Gastrocnemius medialis (tissue), 4 donors: ENCODE measurements at regions of chr11 and their contacts with region 1.

Region 1: GRCh38 chr11:65111744-65112414 is at the start of gene TM7SF2:
- DNase-seq: peak; percentile 93
- ATAC-seq: peak; percentile 81 to 89
- H3K4me3 ChIP-seq: peak within 1 kb of the TSS; percentile 63 to 72 (median 66)
- H3K27ac ChIP-seq: peak within 1 kb of the TSS; percentile 74 to 90 (median 81)
- H3K4me1 ChIP-seq: peaks cover 36 to 48% of the 10 kb centered on the region in 2 donors
- H3K27me3 ChIP-seq: no peaks in the 10 kb centered on the region
- CTCF ChIP-seq: no peak
- POLR2A ChIP-seq: peak; percentile 84 to 94
- total RNA-seq, gene TM7SF2: 7.3 to 18.4 (median 11.0) TPM

Region 2: DNA sequence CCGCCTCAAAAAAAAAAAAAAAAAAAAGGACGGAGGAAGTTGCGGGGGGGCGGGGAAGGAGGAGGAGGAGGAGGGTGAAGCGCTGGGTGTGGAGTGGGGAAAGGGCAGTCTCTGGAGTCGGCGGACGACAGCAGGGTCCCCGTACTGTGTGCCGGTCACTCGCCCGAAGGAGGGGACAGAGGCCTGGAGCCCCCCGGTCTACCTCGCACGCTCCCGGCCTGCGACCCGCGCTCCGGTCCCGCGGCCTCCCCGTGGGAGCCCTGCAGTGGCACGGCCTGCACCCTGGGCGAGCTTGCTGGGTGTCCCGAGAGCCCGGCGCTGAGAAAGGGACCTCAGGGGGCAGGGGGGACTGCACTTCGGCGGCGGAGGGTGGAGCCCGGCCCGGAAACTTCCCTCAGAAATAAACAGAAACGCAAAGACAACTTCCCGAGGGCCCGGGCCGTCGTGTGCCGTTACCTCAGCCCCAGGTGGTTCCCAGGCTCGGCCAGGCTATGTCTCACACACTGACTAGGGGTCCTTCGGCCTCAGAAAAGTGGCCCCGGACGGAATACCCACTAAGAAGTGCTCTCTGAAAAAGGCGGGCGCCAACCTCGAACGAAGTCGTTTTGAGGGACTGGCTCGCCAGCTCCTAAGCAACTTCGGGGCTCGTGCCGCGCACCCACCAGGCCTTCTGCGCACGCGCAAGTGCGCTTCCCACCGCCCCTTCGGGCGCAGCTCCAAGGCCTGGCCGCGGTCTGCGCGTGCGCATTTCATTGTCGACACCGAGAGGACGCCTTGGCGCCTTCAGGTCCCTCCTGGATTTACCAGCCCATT is 140.3 kb before region 1 on chr11 and contains the start of gene MAJIN:
- in situ Hi-C with region 1: no loop called
- intact Hi-C with region 1: no loop called
- DNase-seq: peak; percentile 58 to 76
- ATAC-seq: peak; percentile 90 to 92
- H3K4me3 ChIP-seq: peak within 1 kb of the TSS; percentile 46 to 54 (median 52)
- H3K27ac ChIP-seq: peak within 1 kb of the TSS in 2 of 4 donors; percentile 13 to 48
- H3K4me1 ChIP-seq: peaks cover 0 to 11% of the 10 kb centered on the region in 2 donors
- H3K27me3 ChIP-seq: no peaks in the 10 kb centered on the region
- CTCF ChIP-seq: no peak
- POLR2A ChIP-seq: no peak
- total RNA-seq, gene MAJIN: not detected

Region 3: GRCh38 chr11:65134386-65135253 is 22.7 kb after region 1 on chr11 and contains the start of gene SYVN1:
- in situ Hi-C with region 1: no loop called
- intact Hi-C with region 1: loop called (anchors 1 kb)
- DNase-seq: peak; percentile 96 to 99
- ATAC-seq: peak; percentile 95 to 97
- H3K4me3 ChIP-seq: peak within 1 kb of the TSS; percentile 84 to 99 (median 92)
- H3K27ac ChIP-seq: peak within 1 kb of the TSS; percentile 87 to 99 (median 98)
- H3K4me1 ChIP-seq: peaks cover 27 to 29% of the 10 kb centered on the region in 2 donors
- H3K27me3 ChIP-seq: no peaks in the 10 kb centered on the region
- CTCF ChIP-seq: peak in 1 of 5 experiments; percentile 24
- POLR2A ChIP-seq: peak; percentile 97 to 98
- total RNA-seq, gene SYVN1: 24.6 to 77.5 (median 37.3) TPM

Region 4: GRCh38 chr11:65180877-65181568 is 69.1 kb after region 1 on chr11:
- in situ Hi-C with region 1: loop called in 3 of 4 experiments (anchors 5 kb)
- intact Hi-C with region 1: loop called (anchors 1 kb)
- DNase-seq: peak; percentile 27 to 66
- ATAC-seq: peak; percentile 54 to 55
- H3K4me3 ChIP-seq: peak overlapping the region; percentile 85 to 99 (median 92)
- H3K27ac ChIP-seq: peak overlapping the region; percentile 93 to 99 (median 98)
- H3K4me1 ChIP-seq: peaks cover 18 to 25% of the 10 kb centered on the region in 2 donors
- H3K27me3 ChIP-seq: no peaks in the 10 kb centered on the region
- CTCF ChIP-seq: peak; percentile 52 to 75 (median 73)
- POLR2A ChIP-seq: peak; percentile 76 to 80

Region 5: DNA sequence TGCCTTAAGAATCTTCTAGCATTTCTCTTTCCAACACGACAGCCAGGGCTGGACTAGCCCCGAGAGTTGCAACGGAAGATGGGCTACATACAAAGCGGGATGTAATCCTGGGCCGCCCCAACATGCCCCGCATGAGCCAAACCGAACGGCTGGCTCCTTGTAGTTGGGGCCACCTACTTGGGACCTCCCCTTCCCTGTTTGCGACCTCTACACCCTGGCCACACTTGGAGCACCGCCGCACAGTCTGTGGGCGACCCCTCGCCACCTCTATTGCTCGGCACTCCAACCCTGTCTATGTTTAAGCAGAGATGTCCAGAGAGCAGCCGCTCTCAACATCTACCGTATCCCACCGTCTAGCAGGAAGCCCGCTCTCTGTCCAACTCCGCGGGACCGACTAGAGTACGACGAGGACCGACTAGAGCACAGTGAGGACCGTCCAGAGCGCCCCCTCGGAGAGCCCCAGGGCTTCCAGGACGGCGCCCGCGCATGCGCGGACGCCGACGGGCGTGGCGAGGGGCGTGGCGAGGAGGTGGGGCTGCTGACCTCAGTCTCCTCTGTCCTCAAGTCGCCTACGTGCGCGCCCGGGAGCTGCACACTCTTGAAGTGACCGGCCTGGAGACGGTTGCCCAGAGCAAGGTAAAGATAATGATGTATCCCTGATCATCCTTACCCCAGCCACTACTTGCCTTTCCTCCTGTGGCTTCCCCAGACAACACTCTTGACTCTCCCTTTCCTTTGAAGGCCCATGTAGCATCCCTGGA is 343.0 kb after region 1 on chr11:
- in situ Hi-C with region 1: no loop called
- intact Hi-C with region 1: no loop called
- DNase-seq: peak; percentile 88 to 94
- ATAC-seq: peak; percentile 80 to 88
- H3K4me3 ChIP-seq: peak overlapping the region; percentile 55 to 74 (median 58)
- H3K27ac ChIP-seq: peak overlapping the region; percentile 87 to 93 (median 90)
- H3K4me1 ChIP-seq: peaks cover 12 to 16% of the 10 kb centered on the region in 2 donors
- H3K27me3 ChIP-seq: no peaks in the 10 kb centered on the region
- CTCF ChIP-seq: no peak
- POLR2A ChIP-seq: peak; percentile 83 to 95